Naive thymus-derived CD4-positive, alpha-beta T cell (primary cell): ENCODE measurements at regions of chr6 and their contacts with region 1.

Region 1: DNA sequence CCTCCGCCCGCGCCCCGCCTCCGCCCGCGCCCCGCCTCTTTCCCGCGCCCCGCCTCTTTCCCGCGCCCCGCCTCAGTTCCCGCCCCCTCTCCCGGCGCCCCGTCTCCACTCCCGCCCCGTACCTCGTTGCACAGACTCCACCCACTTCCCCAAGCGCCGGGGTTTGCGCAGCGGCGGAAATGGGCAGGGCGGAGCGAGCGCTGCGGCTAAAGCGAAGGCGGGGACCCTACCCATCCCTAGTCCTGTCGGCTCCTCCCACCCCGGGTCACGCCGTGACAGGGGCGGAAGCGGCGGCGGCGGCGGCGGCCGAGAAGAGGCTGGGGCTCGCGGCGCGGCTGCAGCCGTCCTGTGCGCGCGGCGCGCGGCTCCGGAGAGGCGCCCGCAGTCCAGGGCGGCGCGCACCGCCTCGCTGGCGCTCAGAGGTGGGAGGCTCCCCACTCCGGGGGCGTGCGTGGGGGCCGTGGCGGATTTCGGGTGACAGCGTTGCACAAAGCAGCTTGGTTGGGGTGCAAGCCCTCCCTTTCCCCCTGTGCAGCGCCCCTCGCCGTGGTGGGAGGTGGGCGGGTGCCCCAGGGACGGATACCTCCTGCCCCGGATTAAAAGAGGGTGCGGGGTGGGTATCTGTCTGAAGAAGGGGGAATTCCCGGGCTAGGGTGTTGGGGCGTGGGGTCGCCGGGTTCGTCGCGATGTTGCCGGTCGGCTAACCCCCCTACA is at the start of gene KDM1B:
- DNase-seq: peak; percentile 95 to 100 (median 99)
- ATAC-seq: peak; percentile 95
- H3K4me3 ChIP-seq: peak within 1 kb of the TSS; percentile 95
- H3K4me3 Mint-ChIP-seq: peak within 1 kb of the TSS; percentile 91 to 99 (median 99)
- H3K27ac ChIP-seq: peak within 1 kb of the TSS; percentile 93
- H3K27ac Mint-ChIP-seq: peak within 1 kb of the TSS; percentile 91 to 99 (median 97)
- H3K4me1 ChIP-seq: peaks cover 8 to 17% of the 10 kb centered on the region in 2 donors
- H3K4me1 Mint-ChIP-seq: peaks cover 24 to 36% (median 28%) of the 10 kb centered on the region in 7 donors
- H3K27me3 ChIP-seq: no peaks in the 10 kb centered on the region
- H3K27me3 Mint-ChIP-seq: peaks cover 0 to 7% (median 0%) of the 10 kb centered on the region in 5 donors
- total RNA-seq, gene KDM1B: 7.3 to 25.4 (median 12.5) TPM

Region 2: GRCh38 chr6:17706580-17707370 is 448.5 kb before region 1 on chr6 and contains the start of gene NUP153:
- CTCF ChIA-PET with region 1: no interaction called
- POLR2A ChIA-PET with region 1: interaction called, 9 read pairs
- intact Hi-C with region 1: loop called (anchors 1 kb)
- DNase-seq: peak; percentile 98 to 100 (median 99)
- ATAC-seq: peak; percentile 85
- H3K4me3 ChIP-seq: peak within 1 kb of the TSS; percentile 94
- H3K4me3 Mint-ChIP-seq: peak within 1 kb of the TSS; percentile 86 to 97 (median 94)
- H3K27ac ChIP-seq: peak within 1 kb of the TSS; percentile 100
- H3K27ac Mint-ChIP-seq: peak within 1 kb of the TSS; percentile 92 to 98 (median 95)
- H3K4me1 ChIP-seq: peaks cover 24 to 28% of the 10 kb centered on the region in 2 donors
- H3K4me1 Mint-ChIP-seq: peaks cover 13 to 53% (median 37%) of the 10 kb centered on the region in 7 donors
- H3K27me3 ChIP-seq: no peaks in the 10 kb centered on the region
- H3K27me3 Mint-ChIP-seq: peaks cover 0 to 2% (median 0%) of the 10 kb centered on the region in 5 donors
- total RNA-seq, gene NUP153: 47.7 to 90.9 (median 53.0) TPM

Region 3: GRCh38 chr6:18122124-18123093 is 32.9 kb before region 1 on chr6 and contains the start of gene NHLRC1:
- CTCF ChIA-PET with region 1: no interaction called
- POLR2A ChIA-PET with region 1: no interaction called
- intact Hi-C with region 1: loop called (anchors 1 to 2 kb)
- DNase-seq: peak; percentile 43 to 68 (median 65)
- ATAC-seq: peak; percentile 100
- H3K4me3 ChIP-seq: peak within 1 kb of the TSS; percentile 63
- H3K4me3 Mint-ChIP-seq: peak within 1 kb of the TSS; percentile 81 to 90 (median 87)
- H3K27ac ChIP-seq: no peak within 1 kb of the TSS
- H3K27ac Mint-ChIP-seq: peak within 1 kb of the TSS; percentile 6 to 87 (median 53)
- H3K4me1 ChIP-seq: peaks cover 5 to 8% of the 10 kb centered on the region in 2 donors
- H3K4me1 Mint-ChIP-seq: peaks cover 0 to 15% (median 8%) of the 10 kb centered on the region in 7 donors
- H3K27me3 ChIP-seq: no peaks in the 10 kb centered on the region
- H3K27me3 Mint-ChIP-seq: peaks cover 0 to 65% (median 7%) of the 10 kb centered on the region in 5 donors
- total RNA-seq, gene NHLRC1: 0.39 to 1.4 (median 0.61) TPM

Region 4: GRCh38 chr6:18166312-18167036 is 11.2 kb after region 1 on chr6:
- CTCF ChIA-PET with region 1: no interaction called
- POLR2A ChIA-PET with region 1: no interaction called
- intact Hi-C with region 1: no loop called
- DNase-seq: no peak
- ATAC-seq: peak; percentile 45
- H3K4me3 ChIP-seq: no peak overlapping the region
- H3K4me3 Mint-ChIP-seq: no peak overlapping the region
- H3K27ac ChIP-seq: no peak overlapping the region
- H3K27ac Mint-ChIP-seq: no peak overlapping the region
- H3K4me1 ChIP-seq: no peaks in the 10 kb centered on the region
- H3K4me1 Mint-ChIP-seq: peaks cover 0 to 3% (median 0%) of the 10 kb centered on the region in 7 donors
- H3K27me3 ChIP-seq: no peaks in the 10 kb centered on the region
- H3K27me3 Mint-ChIP-seq: no peaks in the 10 kb centered on the region

Region 5: GRCh38 chr6:18179770-18180356 is 24.6 kb after region 1 on chr6:
- CTCF ChIA-PET with region 1: no interaction called
- POLR2A ChIA-PET with region 1: no interaction called
- intact Hi-C with region 1: no loop called
- DNase-seq: no peak
- ATAC-seq: peak; percentile 42
- H3K4me3 ChIP-seq: no peak overlapping the region
- H3K4me3 Mint-ChIP-seq: no peak overlapping the region
- H3K27ac ChIP-seq: no peak overlapping the region
- H3K27ac Mint-ChIP-seq: no peak overlapping the region
- H3K4me1 ChIP-seq: no peaks in the 10 kb centered on the region
- H3K4me1 Mint-ChIP-seq: peaks cover 0 to 31% (median 12%) of the 10 kb centered on the region in 7 donors
- H3K27me3 ChIP-seq: no peaks in the 10 kb centered on the region
- H3K27me3 Mint-ChIP-seq: no peaks in the 10 kb centered on the region

Region 6: GRCh38 chr6:18387061-18387721 is 231.9 kb after region 1 on chr6 and contains the start of gene RNF144B:
- CTCF ChIA-PET with region 1: no interaction called
- POLR2A ChIA-PET with region 1: interaction called, 4 read pairs
- intact Hi-C with region 1: loop called (anchors 1 to 5 kb)
- DNase-seq: peak; percentile 41 to 73 (median 67)
- ATAC-seq: peak; percentile 92
- H3K4me3 ChIP-seq: peak within 1 kb of the TSS; percentile 70
- H3K4me3 Mint-ChIP-seq: peak within 1 kb of the TSS; percentile 90 to 100 (median 99)
- H3K27ac ChIP-seq: peak within 1 kb of the TSS; percentile 69
- H3K27ac Mint-ChIP-seq: peak within 1 kb of the TSS; percentile 2 to 95 (median 92)
- H3K4me1 ChIP-seq: peaks cover 4 to 18% of the 10 kb centered on the region in 2 donors
- H3K4me1 Mint-ChIP-seq: peaks cover 15 to 48% (median 35%) of the 10 kb centered on the region in 7 donors
- H3K27me3 ChIP-seq: no peaks in the 10 kb centered on the region
- H3K27me3 Mint-ChIP-seq: peaks cover 0 to 21% (median 0%) of the 10 kb centered on the region in 5 donors
- total RNA-seq, gene RNF144B: 1.5 to 23.5 (median 7.9) TPM